Cardiac septum (tissue), 1 donor: ENCODE measurements at regions of chr12 and their contacts with region 1.

Region 1: GRCh38 chr12:100142851-100143559 is at the start of gene BLTP3B:
- DNase-seq: peak; percentile 96
- total RNA-seq, gene BLTP3B: 20.2 TPM

Region 2: GRCh38 chr12:100173111-100173510 is 30.1 kb after region 1 on chr12:
- intact Hi-C with region 1: no loop called
- DNase-seq: no peak

Region 3: GRCh38 chr12:100200463-100201181 is 57.6 kb after region 1 on chr12 and contains the start of gene ACTR6:
- intact Hi-C with region 1: loop called (anchors 5 kb)
- DNase-seq: peak; percentile 98
- total RNA-seq, gene ACTR6: 18.6 TPM

Region 4: DNA sequence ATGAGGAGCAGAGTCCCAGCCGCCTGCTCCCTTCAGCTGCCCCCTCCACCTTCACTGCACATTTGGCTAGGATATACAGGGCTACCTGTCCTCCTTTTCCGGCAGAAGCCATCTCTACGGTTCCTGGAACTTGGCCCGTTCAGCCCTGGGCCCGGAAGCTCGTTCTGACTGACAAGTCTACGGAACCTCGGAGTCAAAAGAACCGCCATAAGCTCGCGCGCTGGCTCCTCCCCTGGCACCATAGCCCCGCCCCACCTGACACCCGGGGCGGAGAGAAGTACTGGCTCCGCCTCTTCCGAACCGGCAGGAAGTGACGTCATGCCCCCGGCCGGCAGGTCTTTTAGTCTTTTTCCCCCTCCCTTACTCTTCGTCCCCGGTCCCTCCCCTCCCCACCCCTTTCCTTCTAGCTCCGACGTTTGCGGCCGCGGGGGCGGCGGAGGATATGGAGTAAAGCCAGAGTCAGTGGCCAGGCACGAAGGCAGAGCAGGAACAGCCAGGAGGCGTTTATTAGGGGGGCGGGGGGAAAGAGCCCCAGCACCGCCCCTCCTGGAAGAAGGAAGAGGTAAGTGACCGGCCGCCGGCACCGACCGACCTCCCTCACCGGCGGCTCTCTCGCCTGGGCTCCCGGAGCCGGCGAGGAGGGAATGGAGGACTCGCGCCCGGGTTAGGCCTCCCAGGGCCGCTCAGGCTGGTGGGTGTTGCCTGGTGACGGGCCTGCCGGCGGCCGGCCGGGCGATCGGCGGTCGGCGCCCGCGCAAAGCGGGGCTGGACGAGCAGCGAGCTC is 124.0 kb after region 1 on chr12 and contains the starts of genes DEPDC4 and SCYL2:
- intact Hi-C with region 1: loop called (anchors 10 kb)
- DNase-seq: peak; percentile 99
- total RNA-seq, gene DEPDC4: 0.62 TPM
- total RNA-seq, gene SCYL2: 39.3 TPM